Right ventricle myocardium inferior (tissue), 1 donor: ENCODE measurements at regions of chr10 and their contacts with region 1.

Region 1: DNA sequence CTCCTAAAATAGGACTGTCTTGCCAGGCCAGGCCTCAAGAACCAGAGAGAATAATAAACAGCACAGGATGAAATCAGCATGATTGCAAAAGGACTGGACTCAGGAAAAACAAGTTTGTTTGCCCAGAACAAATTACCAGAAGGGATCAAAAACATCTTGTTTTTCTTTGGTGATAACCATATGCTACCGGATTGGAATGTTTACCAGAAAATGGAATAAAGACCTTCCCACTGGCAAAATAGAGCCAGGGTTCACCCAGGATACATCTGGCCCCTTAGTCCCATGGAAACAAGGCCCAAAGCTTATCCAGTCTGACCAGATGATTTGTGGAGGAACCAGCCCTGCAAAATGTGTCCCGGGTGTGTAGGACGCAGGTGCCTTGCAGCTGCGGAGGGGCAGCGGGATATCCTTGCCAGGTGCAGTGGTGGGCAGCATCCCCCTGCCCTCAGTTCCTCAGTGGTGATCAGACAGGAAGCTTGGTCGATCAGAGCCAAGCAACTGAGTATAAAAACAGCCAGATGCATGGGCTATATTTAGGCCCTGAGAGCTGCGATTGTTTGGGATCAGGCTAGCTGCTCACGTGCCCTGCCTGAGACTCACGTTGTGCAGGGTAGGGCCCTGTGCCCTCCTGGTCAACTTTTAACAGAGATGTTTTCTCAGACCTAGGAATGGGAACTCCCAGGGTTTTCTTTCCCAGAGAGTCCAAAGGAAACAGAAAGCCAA is 4.6 kb upstream of the ZNF22 start:
- DNase-seq: peak; percentile 72
- ATAC-seq: peak; percentile 61

Region 2: DNA sequence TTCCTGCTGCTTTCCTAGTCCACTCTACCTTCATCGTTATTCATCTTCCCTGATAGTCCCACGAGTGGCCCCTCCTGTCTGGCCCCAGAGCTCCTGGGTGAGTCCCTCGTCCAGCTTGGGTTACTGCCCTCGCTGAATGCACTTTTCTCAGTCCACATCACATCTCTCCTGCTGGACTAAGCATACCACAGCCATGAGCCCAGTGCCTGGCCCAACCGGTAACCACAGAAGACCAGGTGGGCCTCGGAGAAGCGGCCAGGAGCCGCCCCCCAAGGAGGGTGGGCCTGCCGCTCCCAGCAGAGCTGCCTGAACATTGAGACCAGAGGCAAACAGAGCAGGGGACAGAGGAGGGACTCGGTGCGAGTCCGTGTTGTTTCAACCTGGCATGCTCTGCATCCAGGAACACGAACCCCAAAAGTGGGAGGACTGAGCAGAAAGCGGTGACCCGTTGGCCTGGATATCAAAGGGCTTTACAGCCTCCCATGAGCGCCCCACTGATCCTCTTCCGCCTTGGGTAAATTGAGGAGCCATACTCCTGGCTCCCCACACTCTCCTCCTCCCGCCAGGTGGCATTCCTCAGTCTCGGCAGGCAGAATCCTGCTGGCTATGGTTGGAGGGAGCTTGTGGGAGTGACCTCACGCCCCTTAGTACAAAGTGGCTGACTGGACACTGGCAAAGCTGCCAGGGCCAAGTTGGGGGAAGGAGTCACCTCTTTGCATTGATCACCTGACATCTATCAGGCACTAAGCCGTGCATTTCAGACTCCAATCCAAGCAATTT is 71.6 kb before region 1 on chr10:
- intact Hi-C with region 1: no loop called
- DNase-seq: no peak
- ATAC-seq: no peak

Region 3: GRCh38 chr10:44959247-44960087 is 36.6 kb before region 1 on chr10 and contains the start of gene RASSF4:
- intact Hi-C with region 1: loop called (anchors 1 kb)
- DNase-seq: peak; percentile 97
- ATAC-seq: peak; percentile 91
- total RNA-seq, gene RASSF4: 91.5 TPM

Region 4: DNA sequence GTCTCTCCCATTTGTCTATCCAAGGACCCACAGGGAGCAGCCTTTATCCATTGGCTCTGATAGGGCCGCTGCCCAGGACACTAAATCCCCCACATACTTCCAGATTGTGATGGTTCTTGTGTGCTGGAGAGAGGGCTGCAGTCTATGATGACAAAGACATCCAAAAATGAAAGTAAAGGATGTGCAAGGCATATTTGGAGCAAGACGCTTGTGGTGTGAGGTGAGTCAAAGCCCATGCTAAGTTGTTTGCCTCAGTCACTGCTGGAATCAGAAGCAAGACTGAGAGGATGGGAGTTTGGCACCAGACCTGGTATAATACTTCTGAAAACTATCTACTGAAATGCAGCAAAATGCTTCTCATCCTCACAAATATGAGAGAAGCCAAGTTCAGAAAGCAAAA is 27.4 kb after region 1 on chr10:
- intact Hi-C with region 1: no loop called
- DNase-seq: no peak
- ATAC-seq: no peak